ENCODE measurements at regions of chr1 and their contacts with region 1.

Region 1: GRCh38 chr1:171652234-171652822 is at the start of gene MYOC:
- DNase-seq: no peak
- ATAC-seq: no peak
- total RNA-seq, gene MYOC: 117 TPM

Region 2: DNA sequence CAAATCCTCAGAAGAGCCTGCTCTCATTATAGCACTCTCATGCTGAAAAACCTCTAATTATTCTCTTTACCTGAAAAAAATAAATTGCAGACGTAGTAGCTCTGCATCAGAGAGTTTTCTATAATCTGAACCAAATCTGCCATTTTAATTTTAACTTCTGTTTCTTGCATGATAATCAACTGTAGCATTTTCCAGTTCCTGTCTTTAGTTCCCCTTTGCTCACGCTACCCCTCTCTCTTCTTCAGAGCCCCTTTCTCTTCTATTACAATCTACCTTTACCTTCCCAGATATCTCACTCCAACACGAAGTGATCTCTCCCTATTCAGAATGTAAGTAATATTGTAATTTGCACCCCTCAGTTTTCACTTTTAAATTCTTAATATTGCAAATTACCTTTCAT is 372.6 kb before region 1 on chr1:
- intact Hi-C with region 1: no loop called
- DNase-seq: no peak
- ATAC-seq: no peak

Region 3: DNA sequence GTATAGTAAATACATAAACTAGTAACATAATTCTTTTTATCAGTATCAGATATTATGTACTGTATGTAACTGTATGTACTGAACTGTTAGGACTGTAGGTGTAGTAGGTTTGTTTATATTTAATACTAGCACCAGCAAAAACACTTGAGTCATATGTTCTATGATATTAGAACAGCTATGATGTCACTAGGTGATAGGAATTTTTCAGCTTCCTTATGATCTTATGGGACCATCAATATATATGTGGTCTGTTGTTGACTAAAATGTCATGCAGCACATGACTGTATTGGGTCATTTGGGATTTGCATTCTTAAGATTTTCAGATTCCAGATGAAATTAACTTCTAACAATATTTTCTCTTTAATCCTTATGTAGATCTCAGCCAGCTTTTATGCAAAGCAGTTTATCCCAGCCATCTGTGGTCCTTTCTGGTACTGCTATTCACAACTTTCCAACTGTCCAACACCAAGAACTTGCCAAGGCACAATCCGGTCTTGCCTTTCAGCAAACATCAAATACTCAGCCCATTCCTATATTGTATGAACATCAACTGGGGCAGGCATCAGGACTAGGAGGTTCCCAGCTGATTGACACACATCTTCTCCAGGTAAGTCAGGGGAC is 68.6 kb before region 1 on chr1:
- intact Hi-C with region 1: loop called (anchors 2 kb)
- DNase-seq: no peak
- ATAC-seq: no peak

Region 4: DNA sequence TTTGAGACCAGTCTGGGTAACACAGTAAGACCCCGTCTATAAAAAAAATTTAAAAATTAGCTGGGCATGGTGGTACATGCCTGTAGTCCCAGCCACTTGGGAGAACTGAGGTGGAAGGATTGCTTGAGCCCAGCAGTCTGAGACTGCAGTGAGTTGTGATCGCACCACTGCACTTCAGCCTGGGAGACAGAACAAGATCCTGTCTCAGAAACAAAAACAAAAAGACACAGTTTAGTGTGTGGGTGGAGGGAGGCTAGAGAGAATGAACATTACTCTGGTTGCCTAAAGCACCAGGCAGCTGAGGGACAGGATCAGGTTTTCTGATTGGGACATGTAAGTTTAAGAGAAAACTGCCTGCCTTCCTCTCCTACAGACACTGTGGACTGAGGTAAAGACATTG is 47.2 kb after region 1 on chr1:
- intact Hi-C with region 1: no loop called
- DNase-seq: no peak
- ATAC-seq: no peak

Measured in sciatic nerve (tissue), 2 donors.